WTC11 (cell line): ENCODE measurements at regions of chr15 and their contacts with region 1.

Region 1: DNA sequence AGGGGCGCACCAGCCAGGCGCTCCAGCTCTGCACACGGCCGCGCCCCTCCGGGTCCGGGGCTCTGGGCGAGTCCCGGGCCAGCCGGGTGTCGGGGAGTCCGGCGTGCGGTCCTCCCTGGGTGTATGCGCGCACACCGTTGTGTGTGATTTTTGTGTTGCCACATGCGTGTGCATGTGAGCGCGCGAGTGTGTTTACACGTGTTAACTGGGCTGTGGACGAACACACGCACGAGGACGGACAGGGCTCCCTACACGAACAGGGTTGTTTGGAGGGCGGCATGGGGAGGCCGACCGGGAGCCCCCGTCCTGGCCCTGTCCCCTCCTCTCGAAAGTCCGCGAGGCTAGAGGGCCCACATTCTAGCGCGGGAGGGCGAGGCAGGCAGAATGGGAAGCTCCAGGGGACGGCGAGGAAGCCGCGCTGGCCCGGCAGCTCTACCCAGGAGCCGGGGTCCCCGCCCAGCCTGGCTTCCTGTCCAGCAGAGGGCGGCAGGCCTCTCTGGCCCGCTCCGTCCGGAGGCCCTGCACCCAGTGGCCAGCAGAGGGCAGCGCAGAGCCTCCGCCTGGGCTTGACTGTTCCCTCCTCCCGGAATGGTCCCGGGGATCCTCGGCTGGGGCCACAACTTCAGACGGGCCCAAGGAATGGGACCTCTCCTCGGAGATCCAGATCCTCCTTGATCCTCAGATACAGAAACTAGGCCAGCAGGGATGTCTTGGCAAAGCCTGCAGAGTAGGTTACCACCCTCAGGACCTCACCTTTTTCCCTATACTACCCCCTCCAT is 611 bp upstream of the LINGO1 start:
- DNase-seq: peak; percentile 98
- ATAC-seq: peak; percentile 63
- H3K4me3 Mint-ChIP-seq: peak overlapping the region; percentile 63
- H3K27ac Mint-ChIP-seq: peak overlapping the region; percentile 86
- H3K4me1 Mint-ChIP-seq: peaks cover 57% of the 10 kb centered on the region
- H3K27me3 Mint-ChIP-seq: peaks cover 7% of the 10 kb centered on the region
- CTCF ChIP-seq: peak; percentile 92

Region 2: DNA sequence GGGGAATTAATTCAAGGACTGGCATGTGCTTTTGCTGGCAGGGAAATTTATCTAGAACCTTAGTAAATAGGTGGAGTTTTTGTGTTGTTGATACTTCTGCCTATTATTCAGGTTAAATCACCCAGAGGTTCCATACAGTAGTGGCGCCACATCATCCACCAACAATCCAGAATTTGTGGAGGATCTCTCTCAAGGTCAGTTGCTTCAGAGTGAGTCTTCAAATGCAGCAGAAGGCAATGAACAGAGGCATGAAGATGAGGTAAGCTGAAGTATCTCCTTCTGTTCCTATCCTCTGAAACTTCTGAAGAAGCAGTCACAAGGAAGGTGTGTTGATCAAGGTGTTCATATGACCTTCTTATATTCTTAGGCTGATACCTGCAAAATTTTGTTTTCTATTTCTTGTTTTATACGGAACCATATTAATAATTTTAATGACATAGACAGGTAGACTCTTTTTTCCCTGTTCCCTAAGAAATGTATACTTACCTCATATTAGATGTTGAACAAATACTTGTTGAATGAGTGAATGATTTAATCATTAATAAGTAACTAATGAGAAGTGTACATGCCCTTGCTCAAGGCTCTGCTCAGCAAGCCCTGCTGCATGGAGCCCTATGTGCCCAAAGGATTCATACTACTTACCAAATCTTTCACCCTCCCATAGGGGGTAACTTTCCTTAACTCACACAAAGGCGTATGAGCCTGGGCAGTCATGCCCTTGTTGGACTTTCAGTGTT is 169.0 kb before region 1 on chr15:
- CTCF ChIA-PET with region 1: no interaction called
- POLR2A ChIA-PET with region 1: no interaction called
- DNase-seq: no peak
- ATAC-seq: no peak
- H3K4me3 Mint-ChIP-seq: no peak overlapping the region
- H3K27ac Mint-ChIP-seq: no peak overlapping the region
- H3K4me1 Mint-ChIP-seq: peaks cover 23% of the 10 kb centered on the region
- H3K27me3 Mint-ChIP-seq: no peaks in the 10 kb centered on the region
- CTCF ChIP-seq: no peak

Region 3: DNA sequence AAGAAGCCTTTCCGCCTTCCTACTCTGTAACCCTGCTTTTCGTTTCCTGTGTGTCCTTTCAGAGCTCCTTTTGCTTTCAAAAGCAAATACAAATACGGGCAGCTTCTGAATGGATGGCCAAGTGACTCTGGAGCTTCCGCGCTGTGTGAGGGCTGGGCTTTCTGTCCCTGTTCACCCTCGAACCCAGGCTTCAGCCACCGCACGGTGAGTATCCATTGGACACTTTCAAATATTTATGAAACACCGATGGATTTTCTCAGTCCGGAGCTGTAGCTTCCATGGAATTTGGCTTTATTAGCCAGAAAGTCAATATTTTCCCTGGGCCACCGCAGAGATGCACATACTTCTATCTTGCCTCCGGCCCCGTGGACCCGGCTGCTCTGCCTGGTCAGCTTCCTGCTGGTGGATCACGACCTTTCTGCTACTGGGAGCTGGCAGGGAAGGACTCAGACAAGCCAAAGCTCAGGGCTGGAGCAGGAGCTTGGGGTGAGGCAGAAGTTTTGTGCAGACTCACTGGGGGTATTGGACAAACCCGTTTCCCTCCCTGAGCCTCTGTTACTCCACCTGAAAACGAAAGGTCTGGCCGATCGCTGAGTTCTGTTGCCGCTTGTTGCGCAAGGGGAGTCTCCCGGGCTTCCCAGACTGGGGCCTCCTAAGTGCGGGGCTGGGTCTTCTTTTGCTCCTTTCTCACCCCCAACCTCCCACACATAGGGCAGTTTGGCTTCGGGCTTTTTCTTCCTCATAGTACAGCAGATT is 64.2 kb before region 1 on chr15:
- CTCF ChIA-PET with region 1: interaction called, 19 read pairs
- POLR2A ChIA-PET with region 1: no interaction called
- DNase-seq: no peak
- ATAC-seq: peak; percentile 14; the same call in 1 of the 2 replicates
- H3K4me3 Mint-ChIP-seq: no peak overlapping the region
- H3K27ac Mint-ChIP-seq: 0 out of 2 replicates have a peak overlapping the region, but pooled peaks have one; percentile 49
- H3K4me1 Mint-ChIP-seq: peaks cover 33% of the 10 kb centered on the region
- H3K27me3 Mint-ChIP-seq: no peaks in the 10 kb centered on the region
- CTCF ChIP-seq: no peak

Region 4: DNA sequence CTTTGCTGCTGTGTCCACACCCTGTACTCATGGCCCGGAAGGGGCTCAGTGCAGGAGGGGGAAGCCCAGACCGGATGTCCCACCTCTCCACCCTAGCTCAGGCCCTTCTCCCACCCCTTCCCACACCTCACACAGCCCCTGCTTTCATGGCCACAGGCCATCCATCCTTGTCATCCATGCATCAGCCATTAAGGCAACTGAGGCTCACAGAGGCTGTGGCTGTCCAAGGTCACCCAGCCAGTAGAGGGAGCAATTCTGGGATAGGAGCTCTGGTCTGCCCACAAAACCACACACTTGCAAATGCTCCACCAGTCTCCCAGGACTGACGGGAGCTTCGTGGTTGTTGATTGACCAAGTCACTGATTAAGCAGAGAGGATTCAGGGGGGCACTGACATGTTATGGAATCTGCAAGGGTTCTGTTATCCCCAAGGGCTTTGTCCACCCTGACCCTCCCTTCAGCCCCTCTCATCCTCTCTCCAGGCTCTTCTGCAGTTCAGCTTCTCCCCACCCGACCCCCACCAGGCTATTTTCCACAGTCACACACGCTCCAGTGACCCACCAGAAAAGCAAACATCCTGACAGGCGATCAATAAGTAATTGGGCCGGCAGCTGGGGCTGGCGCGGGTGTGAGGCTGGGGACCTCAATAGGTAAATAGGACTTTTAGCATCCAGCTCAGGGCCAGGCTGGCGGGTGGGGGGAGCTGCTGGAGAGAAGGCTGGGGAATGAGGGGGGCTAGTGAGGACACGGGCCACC is 15.7 kb before region 1 on chr15:
- CTCF ChIA-PET with region 1: interaction called, 195 read pairs
- POLR2A ChIA-PET with region 1: interaction called, 9 read pairs
- DNase-seq: peak; percentile 56
- ATAC-seq: peak; percentile 49
- H3K4me3 Mint-ChIP-seq: no peak overlapping the region
- H3K27ac Mint-ChIP-seq: no peak overlapping the region; the same call in 1 of the 2 replicates
- H3K4me1 Mint-ChIP-seq: peaks cover 41% of the 10 kb centered on the region
- H3K27me3 Mint-ChIP-seq: no peaks in the 10 kb centered on the region; the same call in 1 of the 2 replicates
- CTCF ChIP-seq: peak; percentile 19; the same call in 1 of the 2 replicates

Region 5: DNA sequence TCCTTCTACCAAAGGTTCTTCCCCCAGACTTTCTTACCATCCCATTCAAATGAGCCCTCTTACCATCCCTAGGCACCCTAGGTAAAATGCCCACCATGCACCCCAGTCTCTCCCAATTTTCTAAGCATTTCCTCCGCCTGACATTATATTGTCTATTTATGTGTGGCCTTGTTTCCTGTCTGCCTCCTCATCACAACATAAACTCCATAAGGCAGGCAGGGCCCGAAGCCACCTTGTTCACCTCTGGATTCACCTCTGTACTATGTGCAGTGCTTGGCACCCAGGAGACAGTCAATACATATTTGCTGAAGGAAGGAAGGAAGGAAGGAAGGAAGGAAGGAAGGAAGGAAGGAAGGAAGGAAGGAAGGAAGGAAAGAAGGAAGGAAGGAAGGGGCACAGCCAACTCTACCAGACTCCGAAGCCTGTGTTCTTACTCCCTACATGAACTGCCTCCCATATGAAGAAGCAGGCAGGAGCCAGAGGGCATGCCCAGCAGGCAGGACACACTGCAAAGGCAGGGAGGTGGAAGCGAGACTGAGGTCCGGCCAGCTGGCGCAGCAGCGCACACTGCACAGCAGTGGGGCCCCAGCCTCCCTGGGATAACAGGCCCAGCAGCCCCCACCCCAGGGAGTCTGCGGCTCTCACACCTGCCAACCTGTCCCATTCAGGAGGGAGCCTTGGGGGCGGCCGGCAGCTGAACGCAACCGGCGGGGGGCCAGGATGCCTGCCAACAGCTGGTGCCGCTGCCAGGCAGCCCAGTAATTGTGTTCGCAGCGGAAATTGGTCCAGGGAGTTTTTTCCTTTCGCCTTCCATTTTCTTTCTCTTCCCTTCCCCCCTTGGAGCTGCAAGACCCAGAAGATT is 105.3 kb after region 1 on chr15:
- CTCF ChIA-PET with region 1: interaction called, 15 read pairs
- POLR2A ChIA-PET with region 1: interaction called, 3 read pairs
- DNase-seq: peak; percentile 40
- ATAC-seq: peak; percentile 10
- H3K4me3 Mint-ChIP-seq: peak overlapping the region; percentile 52
- H3K27ac Mint-ChIP-seq: no peak overlapping the region
- H3K4me1 Mint-ChIP-seq: peaks cover 46% of the 10 kb centered on the region
- H3K27me3 Mint-ChIP-seq: no peaks in the 10 kb centered on the region; the same call in 1 of the 2 replicates
- CTCF ChIP-seq: no peak

Region 6: DNA sequence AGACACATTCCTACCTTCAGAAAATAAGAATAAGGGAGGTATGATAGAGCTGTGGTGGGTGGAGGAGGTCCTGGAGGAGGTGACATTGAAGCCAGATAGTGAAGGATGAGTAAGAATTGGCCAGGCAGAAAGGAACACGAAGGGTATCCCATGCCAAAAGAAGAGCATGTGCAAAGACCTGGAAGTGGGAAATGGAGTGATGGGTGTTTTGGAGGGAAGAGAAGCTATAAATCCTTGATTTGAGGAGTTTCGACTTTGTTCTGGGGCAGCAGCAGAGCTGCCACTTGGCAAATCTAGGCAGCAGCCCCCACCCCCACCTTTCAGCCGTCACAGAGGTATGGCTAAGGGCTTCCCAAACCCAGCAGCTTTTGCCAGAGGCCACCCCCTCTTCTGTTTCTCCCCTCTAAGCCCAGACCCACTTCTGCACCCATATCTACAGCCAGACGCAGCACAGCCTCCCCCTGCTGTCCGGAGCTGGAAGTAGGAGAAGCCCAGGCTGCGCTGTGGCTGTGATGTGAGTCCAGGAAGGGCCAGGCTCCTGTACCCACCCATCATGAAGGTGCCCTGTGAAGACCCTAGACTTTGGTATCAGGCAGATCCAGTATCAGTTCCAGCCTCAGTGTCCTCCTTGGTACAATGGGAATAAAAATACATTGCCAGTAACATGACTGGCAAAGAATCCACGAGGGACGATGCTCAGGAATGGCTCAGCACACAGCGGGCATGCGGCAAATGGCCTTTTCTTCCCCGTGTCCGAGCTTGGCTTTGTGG is 188.1 kb after region 1 on chr15:
- CTCF ChIA-PET with region 1: interaction called, 122 read pairs
- POLR2A ChIA-PET with region 1: interaction called, 3 read pairs
- DNase-seq: peak; percentile 82
- ATAC-seq: peak; percentile 72
- H3K4me3 Mint-ChIP-seq: peak overlapping the region; percentile 52; the same call in 1 of the 2 replicates
- H3K27ac Mint-ChIP-seq: no peak overlapping the region
- H3K4me1 Mint-ChIP-seq: peaks cover 29% of the 10 kb centered on the region
- H3K27me3 Mint-ChIP-seq: peaks cover 46% of the 10 kb centered on the region
- CTCF ChIP-seq: peak; percentile 42; the same call in 1 of the 2 replicates

Region 7: GRCh38 chr15:77870195-77871065 is 237.1 kb after region 1 on chr15:
- CTCF ChIA-PET with region 1: interaction called, 24 read pairs
- POLR2A ChIA-PET with region 1: no interaction called
- DNase-seq: peak; percentile 92
- ATAC-seq: peak; percentile 78
- H3K4me3 Mint-ChIP-seq: no peak overlapping the region
- H3K27ac Mint-ChIP-seq: no peak overlapping the region
- H3K4me1 Mint-ChIP-seq: peaks cover 4% of the 10 kb centered on the region; the same call in 1 of the 2 replicates
- H3K27me3 Mint-ChIP-seq: no peaks in the 10 kb centered on the region; the same call in none of the 2 replicates
- CTCF ChIP-seq: peak; percentile 90